ENCODE measurements at regions of chr17 and their contacts with region 1.

Region 1: DNA sequence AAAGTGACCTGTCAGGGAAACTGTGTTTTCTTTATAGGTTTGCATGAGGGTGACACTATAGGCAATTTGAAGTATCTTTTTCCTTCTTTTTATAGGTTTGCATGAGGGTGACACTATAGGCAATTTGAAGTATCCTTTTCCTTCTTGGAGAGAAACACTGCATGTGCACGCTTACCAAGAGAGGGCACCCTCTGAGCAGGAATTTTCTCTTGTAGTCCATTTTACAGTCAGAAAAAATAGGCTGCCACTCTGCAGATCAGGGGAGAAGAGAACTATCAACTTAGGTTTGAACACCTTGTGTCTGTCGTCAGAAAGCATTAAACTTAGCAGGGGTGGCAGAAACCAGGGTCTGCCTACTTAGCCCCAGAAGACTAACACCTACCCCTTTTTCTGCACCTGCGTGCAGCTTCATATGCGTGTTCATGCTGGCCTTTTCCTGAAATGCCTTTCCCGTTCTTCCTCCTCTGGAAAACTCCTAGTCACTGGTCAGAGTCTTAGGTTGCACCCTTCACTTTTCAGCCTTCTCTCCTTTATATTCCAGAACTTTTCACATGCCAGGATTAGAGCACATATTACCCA is 16.4 kb upstream of the SMIM36 start:
- DNase-seq: peak in 1 of 3 donors; percentile 23
- ATAC-seq: peak; percentile 38
- H3K4me3 ChIP-seq: no peak overlapping the region
- H3K4me1 ChIP-seq: no peaks in the 10 kb centered on the region
- CTCF ChIP-seq: no peak

Region 2: DNA sequence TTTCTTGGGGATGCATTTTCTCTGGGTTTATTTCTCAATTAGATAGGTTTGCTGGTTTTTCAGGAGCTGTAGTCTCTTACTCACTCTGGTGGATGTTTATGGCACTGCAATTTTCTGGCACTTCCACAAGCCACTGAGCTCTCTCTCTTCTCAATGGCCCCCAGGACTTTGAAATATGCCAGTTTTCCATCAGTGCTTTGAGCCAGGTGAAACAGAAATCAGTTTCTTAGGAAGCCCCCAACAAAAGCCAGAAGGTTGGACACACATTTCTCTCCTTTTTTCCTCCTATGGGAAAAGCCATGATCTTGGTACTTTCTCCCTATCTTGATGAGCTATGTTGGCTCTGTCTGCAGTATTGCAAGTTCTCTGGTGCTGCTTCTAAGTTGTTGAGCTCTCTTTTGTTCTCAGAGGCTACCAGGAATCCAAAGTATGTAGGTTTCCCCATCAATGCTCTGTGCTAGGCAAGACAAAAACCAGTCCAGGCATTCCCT is 74.3 kb after region 1 on chr17:
- intact Hi-C with region 1: loop called in 1 of 2 experiments (anchors 5 kb)
- DNase-seq: peak in 1 of 3 donors; percentile 48
- ATAC-seq: peak; percentile 40
- H3K4me3 ChIP-seq: no peak overlapping the region
- H3K4me1 ChIP-seq: no peaks in the 10 kb centered on the region
- CTCF ChIP-seq: no peak

Region 3: GRCh38 chr17:55641676-55642081 is 114.0 kb after region 1 on chr17:
- intact Hi-C with region 1: loop called in 1 of 2 experiments (anchors 10 kb)
- DNase-seq: peak in 2 of 3 donors; percentile 37 to 69
- ATAC-seq: peak; percentile 58
- H3K4me3 ChIP-seq: no peak overlapping the region
- H3K4me1 ChIP-seq: no peaks in the 10 kb centered on the region
- CTCF ChIP-seq: peak; percentile 21

Region 4: DNA sequence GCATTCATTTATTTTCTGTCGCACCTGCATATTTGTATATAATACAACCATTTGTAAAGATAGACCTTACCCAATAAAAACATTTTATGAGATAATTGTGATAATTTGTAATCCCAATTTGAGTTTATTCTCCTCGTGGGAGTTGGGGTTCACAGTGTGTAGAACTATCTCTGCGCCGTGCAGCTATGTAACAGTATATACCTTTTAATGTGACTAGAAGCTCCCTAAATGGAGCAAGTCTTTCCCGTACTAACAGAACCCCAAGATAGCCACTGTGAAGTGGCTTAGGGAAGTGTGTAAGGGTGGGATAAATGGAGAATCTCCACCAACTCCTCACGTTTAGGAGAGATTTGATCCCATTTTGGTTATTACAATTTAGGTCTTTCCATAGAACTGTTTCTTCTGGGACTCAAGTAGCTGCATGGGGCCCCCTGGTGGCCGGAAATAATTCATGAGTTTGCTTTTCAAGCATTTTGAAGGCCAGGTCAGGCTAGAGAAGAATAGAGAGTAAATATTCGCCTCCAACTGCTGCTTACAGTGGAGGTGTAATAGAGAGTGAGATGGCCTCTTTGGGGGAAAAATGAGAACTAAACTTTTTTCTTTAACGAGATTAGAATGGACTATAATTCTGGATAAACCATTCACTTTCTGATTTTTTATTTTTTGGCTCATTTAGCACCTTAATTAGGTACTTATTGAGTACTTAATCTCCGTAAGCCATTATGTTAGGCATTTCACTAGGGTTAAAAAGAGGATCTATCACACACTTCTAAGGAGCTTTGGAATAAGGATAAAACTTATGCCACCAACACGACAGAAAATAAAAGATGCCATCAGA is 190.5 kb after region 1 on chr17:
- intact Hi-C with region 1: loop called in 1 of 2 experiments (anchors 5 kb)
- DNase-seq: peak in 2 of 3 donors; percentile 51 to 93
- ATAC-seq: peak; percentile 61
- H3K4me3 ChIP-seq: no peak overlapping the region
- H3K4me1 ChIP-seq: no peaks in the 10 kb centered on the region
- CTCF ChIP-seq: peak; percentile 50

Region 5: GRCh38 chr17:55770148-55770870 is 242.7 kb after region 1 on chr17:
- intact Hi-C with region 1: loop called (anchors 5 kb)
- DNase-seq: no peak
- ATAC-seq: peak; percentile 66
- H3K4me3 ChIP-seq: no peak overlapping the region
- H3K4me1 ChIP-seq: no peaks in the 10 kb centered on the region
- CTCF ChIP-seq: no peak

Measured in mucosa of descending colon (tissue), 3 donors.